Heart right ventricle (tissue), 16 donors: ENCODE measurements at regions of chrX and their contacts with region 1.

Region 1: DNA sequence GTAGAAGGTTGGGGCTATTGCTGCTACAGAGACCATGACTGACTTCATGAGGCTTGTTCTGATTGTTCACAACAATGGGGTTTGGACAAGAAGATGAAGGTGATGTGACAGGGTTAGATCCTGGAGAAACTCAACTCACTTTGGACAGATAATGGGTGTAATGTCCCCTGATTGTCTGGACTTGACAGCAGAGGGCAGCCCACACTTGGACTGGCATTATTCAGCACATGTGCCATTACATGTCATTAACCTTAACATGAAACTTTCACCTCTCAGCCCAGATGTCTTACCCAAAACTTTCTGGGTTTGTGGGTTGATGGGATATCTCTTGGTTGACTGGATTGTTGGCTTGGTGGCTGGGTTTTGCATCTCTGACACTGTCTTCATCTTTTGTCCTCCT is 101.5 kb downstream of the MXRA5 start:
- DNase-seq: no peak
- ATAC-seq: no peak
- H3K4me3 ChIP-seq: no peak overlapping the region
- H3K27ac ChIP-seq: no peak overlapping the region
- H3K4me1 ChIP-seq: peaks cover 0 to 5% (median 0%) of the 10 kb centered on the region in 9 donors
- H3K27me3 ChIP-seq: no peaks in the 10 kb centered on the region
- CTCF ChIP-seq: peak in 7 of 9 donors; percentile 19 to 41 (median 26)

Region 2: GRCh38 chrX:3522101-3522650 is 277.2 kb after region 1 on chrX:
- intact Hi-C with region 1: loop called in 1 of 10 experiments (anchors 10 kb)
- DNase-seq: no peak
- ATAC-seq: peak in 2 of 8 donors; percentile 54 to 56
- H3K4me3 ChIP-seq: no peak overlapping the region
- H3K27ac ChIP-seq: peak overlapping the region in 5 of 10 donors; percentile 34 to 73 (median 59)
- H3K4me1 ChIP-seq: peaks cover 0 to 19% (median 0%) of the 10 kb centered on the region in 9 donors
- H3K27me3 ChIP-seq: no peaks in the 10 kb centered on the region
- CTCF ChIP-seq: no peak